ENCODE measurements at regions of chr19 and their contacts with region 1.

Region 1: DNA sequence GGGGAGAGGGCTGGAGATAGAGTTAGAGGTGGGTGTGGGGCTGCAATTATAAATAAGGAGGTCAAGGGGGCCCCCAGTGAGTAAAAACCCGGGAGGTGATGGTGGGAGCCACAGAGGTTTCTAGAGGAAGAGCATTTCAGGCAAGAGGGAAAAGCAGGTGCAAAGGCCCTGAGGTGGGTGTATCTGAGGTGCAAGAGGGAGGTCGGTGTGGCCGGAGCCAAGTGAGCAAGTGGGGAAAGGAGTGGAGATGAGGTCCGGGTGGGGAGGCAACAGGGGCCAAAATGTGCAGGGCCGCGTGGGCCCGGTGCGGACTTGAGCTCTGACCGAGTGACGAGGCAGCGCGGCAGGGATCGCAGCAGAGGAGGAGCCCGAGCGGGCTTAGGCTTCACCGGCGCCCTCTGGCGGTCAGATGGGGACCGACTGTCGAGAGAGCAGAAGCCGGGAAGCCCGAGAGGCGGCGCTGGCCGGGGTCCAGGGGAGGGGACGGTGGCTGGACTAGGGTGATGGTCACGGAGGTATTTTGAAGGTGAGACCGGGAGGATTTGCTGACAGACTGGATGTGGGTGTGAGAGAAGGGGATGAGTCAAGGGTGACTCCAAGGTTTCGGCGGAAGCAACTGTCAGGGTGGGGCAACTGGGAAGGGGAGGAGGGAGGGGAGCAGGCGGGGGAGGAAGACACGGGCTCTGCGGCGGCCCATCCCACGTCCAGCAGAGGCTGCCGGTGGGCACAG is 17.7 kb upstream of the SPACA4 start:
- DNase-seq: peak; percentile 79 to 99
- H3K4me3 ChIP-seq: peak overlapping the region; percentile 29 to 58 (median 40); a peak in 7 of 8 replicates
- H3K27ac ChIP-seq: no peak overlapping the region
- H3K4me1 ChIP-seq: peaks cover 0 to 7% (median 1%) of the 10 kb centered on the region in 4 experiments; a peak in 4 of 7 replicates
- H3K27me3 ChIP-seq: peaks cover 0 to 7% (median 1%) of the 10 kb centered on the region in 4 experiments; a peak in 2 of 7 replicates
- CTCF ChIP-seq: peak; percentile 90 to 99 (median 98)
- EP300 ChIP-seq: no peak
- POLR2A ChIP-seq: no peak
- RAD21 ChIP-seq: peak; percentile 57 to 71

Region 2: GRCh38 chr19:48391107-48391986 is 197.5 kb before region 1 on chr19 and contains the start of gene KDELR1:
- CTCF ChIA-PET with region 1: interaction called, 10 read pairs
- POLR2A ChIA-PET with region 1: no interaction called
- DNase-seq: peak in 1 of 2 experiments; percentile 97
- H3K4me3 ChIP-seq: peak within 1 kb of the TSS; percentile 81 to 96 (median 90)
- H3K27ac ChIP-seq: peak within 1 kb of the TSS; percentile 72; the same call in 1 of the 2 replicates
- H3K4me1 ChIP-seq: peaks cover 0 to 35% (median 21%) of the 10 kb centered on the region in 4 experiments; a peak in 6 of 7 replicates
- H3K27me3 ChIP-seq: peaks cover 6 to 35% (median 29%) of the 10 kb centered on the region in 4 experiments
- CTCF ChIP-seq: peak; percentile 84 to 93 (median 84)
- EP300 ChIP-seq: no peak
- POLR2A ChIP-seq: no peak
- RAD21 ChIP-seq: peak; percentile 28 to 45; a peak in 3 of 4 replicates
- total RNA-seq, gene KDELR1: 224 and 225 TPM in 2 replicates

Region 3: DNA sequence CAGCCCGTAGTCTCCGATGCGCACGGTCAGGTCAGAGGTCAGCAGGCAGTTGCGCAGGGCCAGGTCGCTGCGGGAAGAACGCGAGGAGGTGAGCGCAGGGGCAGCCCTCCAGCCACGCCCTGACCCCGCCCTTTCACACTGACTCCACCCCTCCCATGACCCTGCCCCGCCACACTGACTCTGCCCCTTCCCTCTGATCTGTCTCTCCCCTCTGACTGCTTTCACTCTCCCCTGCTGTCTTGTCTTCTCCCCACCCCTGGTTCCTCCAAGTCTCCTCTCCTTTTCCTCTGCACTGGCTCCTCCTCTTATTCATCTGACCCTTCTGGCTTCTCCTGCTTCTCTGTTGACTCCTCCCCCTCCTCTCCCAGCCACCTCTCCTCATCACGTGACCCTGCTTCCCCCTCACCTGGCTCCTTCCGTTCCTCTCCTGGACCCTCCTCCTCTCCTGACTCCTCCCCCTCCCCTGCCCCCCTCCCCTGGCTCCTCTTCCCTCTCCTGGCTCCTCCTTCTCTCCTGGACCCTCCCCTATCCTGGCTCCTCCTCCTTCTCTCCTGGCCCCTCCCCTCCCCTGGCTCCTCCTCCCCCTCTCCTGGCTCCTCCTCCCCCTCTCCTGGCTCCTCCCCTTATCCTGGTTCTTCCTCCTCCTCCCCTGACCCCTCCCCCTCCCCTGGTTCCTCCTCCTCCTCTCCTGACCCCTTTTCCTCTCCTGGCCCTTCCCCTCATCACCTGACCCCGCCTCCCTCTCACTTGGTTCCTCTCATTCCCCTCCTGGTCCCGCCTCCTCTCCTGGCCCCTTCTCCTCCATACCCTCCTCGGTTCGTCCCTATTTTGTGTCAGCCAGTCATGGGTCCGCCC is 87.1 kb before region 1 on chr19:
- CTCF ChIA-PET with region 1: interaction called, 353 read pairs
- POLR2A ChIA-PET with region 1: interaction called, 7 read pairs
- DNase-seq: peak; percentile 96 to 100
- H3K4me3 ChIP-seq: peak overlapping the region; percentile 19 to 60 (median 44); a peak in 7 of 8 replicates
- H3K27ac ChIP-seq: peak overlapping the region; percentile 58; the same call in 1 of the 2 replicates
- H3K4me1 ChIP-seq: peaks cover 0 to 14% (median 12%) of the 10 kb centered on the region in 4 experiments; a peak in 6 of 7 replicates
- H3K27me3 ChIP-seq: no peaks in the 10 kb centered on the region
- CTCF ChIP-seq: no peak
- EP300 ChIP-seq: 0 out of 3 replicates have a peak, but pooled peaks of 1 of the 2 experiments have one; percentile 7
- POLR2A ChIP-seq: no peak
- RAD21 ChIP-seq: no peak

Region 4: GRCh38 chr19:48540110-48540509 is 48.7 kb before region 1 on chr19:
- CTCF ChIA-PET with region 1: interaction called, 10 read pairs
- POLR2A ChIA-PET with region 1: interaction called, 3 read pairs
- DNase-seq: no peak
- H3K4me3 ChIP-seq: no peak overlapping the region
- H3K27ac ChIP-seq: no peak overlapping the region
- H3K4me1 ChIP-seq: peaks cover 0 to 12% (median 7%) of the 10 kb centered on the region in 4 experiments; a peak in 6 of 7 replicates
- H3K27me3 ChIP-seq: no peaks in the 10 kb centered on the region
- CTCF ChIP-seq: no peak
- EP300 ChIP-seq: no peak
- POLR2A ChIP-seq: no peak
- RAD21 ChIP-seq: no peak

Region 5: GRCh38 chr19:48602117-48602739 is 13.4 kb after region 1 on chr19:
- CTCF ChIA-PET with region 1: interaction called, 143 read pairs
- POLR2A ChIA-PET with region 1: interaction called, 17 read pairs
- DNase-seq: no peak
- H3K4me3 ChIP-seq: no peak overlapping the region
- H3K27ac ChIP-seq: no peak overlapping the region
- H3K4me1 ChIP-seq: no peaks in the 10 kb centered on the region
- H3K27me3 ChIP-seq: no peaks in the 10 kb centered on the region
- CTCF ChIP-seq: no peak
- EP300 ChIP-seq: no peak
- POLR2A ChIP-seq: no peak
- RAD21 ChIP-seq: no peak

Region 6: DNA sequence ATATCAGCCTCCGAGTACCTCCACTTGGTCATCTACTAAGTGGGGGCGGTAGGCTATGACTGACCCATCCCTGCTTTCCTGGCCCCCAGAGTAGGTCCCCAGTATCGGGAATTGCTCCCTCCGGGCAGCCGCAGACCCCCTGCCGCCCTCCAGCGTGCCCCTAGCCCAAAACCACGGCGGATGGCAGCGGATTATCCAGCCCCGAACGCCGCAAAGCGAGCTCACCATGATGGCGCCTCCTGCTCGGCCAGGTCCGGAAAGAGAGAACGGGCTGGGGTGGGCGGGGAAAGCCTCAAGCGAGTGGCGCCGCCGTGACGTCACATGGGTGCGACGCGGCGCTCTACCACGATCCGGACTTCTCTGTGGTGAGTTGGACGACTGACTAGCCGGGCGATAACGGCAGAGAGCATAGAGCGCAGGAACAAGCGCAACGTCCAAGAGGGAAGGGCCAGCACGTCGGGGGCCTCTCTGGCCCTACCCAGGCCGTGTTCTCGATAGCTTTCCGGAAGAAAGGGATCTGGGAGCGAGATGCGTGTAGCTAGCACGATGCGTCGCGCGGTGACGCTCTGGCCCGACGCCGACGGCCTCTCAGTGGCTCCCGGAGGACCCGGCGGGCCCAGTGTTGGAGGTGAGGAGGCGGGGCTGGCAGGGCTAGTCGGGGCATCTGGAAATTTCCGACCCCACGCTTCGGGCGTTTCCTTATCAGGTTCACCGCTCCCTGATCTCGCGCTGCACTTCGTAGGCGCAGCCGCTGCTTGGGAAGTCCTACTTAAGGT is 30.3 kb after region 1 on chr19 and contains the starts of genes RPL18 and SPHK2:
- CTCF ChIA-PET with region 1: interaction called, 37 read pairs
- POLR2A ChIA-PET with region 1: interaction called, 175 read pairs
- DNase-seq: peak; percentile 97 to 98
- H3K4me3 ChIP-seq: peak within 1 kb of the TSS; percentile 83 to 97 (median 94)
- H3K27ac ChIP-seq: peak within 1 kb of the TSS; percentile 87
- H3K4me1 ChIP-seq: peaks cover 3 to 40% (median 32%) of the 10 kb centered on the region in 4 experiments
- H3K27me3 ChIP-seq: no peaks in the 10 kb centered on the region
- CTCF ChIP-seq: peak in 1 of 3 experiments; percentile 9; a peak in 1 of 4 replicates
- EP300 ChIP-seq: no peak; a peak in 1 of 3 replicates
- POLR2A ChIP-seq: peak; percentile 95 to 99
- RAD21 ChIP-seq: no peak
- total RNA-seq, gene RPL18: 1,669 and 1,693 TPM in 2 replicates
- total RNA-seq, gene SPHK2: 60.9 and 61.6 TPM in 2 replicates

Region 7: GRCh38 chr19:48638831-48639402 is 50.1 kb after region 1 on chr19:
- CTCF ChIA-PET with region 1: no interaction called
- POLR2A ChIA-PET with region 1: no interaction called
- DNase-seq: peak in 1 of 2 experiments; percentile 86
- H3K4me3 ChIP-seq: peak overlapping the region in 3 of 4 experiments; percentile 0 to 67 (median 43); a peak in 4 of 8 replicates
- H3K27ac ChIP-seq: peak overlapping the region; percentile 70
- H3K4me1 ChIP-seq: peaks cover 9 to 26% (median 18%) of the 10 kb centered on the region in 4 experiments
- H3K27me3 ChIP-seq: peaks cover 0 to 2% (median 0%) of the 10 kb centered on the region in 4 experiments; a peak in 2 of 7 replicates
- CTCF ChIP-seq: no peak
- EP300 ChIP-seq: no peak
- POLR2A ChIP-seq: no peak
- RAD21 ChIP-seq: no peak

Measured in H1 (cell line).